Sciatic nerve (tissue), 2 donors: ENCODE measurements at regions of chr12 and their contacts with region 1.

Region 1: DNA sequence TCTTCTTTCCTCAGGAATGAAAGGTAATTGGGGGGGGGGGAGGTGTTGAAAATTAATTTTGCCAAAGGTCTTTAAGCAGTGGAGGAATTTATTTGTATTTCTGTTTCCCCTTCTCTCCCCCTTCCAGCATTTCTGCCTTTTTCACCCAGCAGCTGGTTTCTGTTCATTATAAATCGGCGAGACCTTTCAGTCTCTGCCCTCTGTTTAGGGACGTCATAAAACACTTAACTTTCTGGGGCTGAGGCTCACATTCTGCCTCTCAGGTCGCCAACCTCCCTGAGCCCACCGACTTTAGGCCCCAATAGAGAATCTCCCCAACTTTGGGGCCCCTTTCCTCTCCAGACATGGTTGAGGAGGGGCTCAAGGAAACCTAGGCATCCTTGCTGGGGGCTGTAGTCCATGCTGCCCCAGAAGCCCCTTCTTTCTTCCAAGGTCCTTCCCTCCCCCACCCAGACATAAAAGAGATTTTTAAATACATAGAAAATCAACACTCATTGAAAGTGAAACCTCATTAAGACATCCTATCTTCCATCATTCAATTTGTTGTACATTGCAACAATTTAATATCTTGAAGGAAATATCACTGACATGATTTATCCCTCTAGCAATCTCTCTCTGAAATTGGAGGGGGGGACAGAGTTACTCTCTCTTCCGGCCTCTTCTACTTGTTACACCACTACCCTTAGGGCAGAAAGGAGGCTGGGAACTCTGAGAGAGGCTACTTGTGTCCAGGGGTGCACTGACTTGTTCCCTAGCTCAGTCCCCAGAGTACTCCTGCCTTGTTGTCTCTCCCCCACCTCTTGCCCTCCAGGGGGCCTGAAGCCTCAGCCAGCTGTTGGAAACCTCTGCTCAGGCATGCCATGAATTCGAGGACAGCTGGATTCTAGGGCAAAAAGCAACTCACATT is 2.5 kb upstream of the HOXC6 start:
- DNase-seq: no peak
- ATAC-seq: no peak

Region 2: DNA sequence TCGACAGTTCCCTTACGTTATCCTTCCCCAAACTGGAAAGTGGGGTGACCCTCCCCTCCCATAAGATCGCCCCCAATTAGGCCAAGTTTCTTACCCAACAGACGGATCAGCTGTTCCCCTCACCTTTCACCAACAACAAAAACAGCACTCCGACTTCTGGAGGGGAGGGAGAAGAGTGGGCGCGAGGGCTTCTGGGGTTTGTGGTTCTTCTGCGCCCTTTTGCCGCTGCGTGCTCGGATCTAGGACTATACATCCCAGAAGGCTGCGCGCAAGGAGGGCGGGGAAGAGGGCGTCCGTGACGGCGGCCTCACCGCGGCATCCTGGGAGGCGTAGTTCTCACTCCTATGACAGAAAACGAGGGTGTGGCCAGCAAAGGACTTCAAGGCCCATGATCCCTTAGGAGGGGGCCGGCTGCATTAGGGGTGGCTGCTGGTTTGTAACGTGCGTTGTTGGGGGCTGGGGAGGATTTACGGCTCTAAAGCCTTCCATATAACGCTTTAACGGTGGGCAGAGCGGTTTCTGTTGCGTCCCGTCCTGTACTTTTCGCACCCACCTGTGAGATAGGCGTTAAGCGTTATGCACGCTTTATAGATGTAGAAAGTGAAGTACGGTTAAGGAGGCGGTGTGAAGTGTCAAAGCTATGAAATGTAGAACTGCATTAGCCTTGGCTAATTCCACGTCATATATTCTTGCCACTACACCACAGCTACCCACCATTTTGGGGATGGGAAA is 298.3 kb before region 1 on chr12 and contains the start of gene CALCOCO1:
- intact Hi-C with region 1: no loop called
- DNase-seq: peak; percentile 97
- ATAC-seq: peak; percentile 99
- total RNA-seq, gene CALCOCO1: 206 TPM

Region 3: DNA sequence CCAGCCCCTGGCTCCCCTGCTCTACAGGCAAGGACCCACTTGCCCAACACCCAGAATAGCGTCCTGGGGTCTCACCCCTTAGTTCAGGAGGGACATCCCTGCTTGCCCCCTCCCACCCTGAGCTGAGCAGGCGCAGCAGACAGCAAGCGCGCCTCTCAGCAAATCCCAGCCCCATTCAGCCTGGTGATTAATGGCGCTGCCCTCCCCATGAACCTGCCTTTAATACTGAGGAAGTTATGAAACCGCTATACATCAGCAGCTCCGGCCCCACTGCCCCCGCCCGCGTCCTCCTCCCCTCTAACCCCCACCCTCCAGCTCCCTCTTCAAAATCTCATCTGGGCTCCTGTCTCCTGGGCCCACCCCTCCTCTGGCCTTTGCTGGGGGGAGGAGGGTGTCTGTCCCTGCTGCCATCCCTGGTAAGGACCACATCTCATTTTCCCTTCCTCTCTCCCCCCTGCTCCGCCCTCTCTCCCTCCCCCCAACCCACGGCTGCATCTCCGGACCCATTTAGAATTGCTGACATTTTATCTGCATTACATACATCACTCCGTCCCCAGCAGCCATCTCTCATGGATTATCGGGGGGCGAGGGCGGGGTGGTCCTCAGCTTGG is 170.1 kb after region 1 on chr12:
- intact Hi-C with region 1: loop called (anchors 2 kb)
- DNase-seq: no peak
- ATAC-seq: no peak